Left ventricle myocardium superior (tissue), 1 donor: ENCODE measurements at regions of chr6 and their contacts with region 1.

Region 1: GRCh38 chr6:56370561-56371211 is 123.3 kb upstream of the COL21A1 start:
- DNase-seq: no peak
- ATAC-seq: peak; percentile 78

Region 2: DNA sequence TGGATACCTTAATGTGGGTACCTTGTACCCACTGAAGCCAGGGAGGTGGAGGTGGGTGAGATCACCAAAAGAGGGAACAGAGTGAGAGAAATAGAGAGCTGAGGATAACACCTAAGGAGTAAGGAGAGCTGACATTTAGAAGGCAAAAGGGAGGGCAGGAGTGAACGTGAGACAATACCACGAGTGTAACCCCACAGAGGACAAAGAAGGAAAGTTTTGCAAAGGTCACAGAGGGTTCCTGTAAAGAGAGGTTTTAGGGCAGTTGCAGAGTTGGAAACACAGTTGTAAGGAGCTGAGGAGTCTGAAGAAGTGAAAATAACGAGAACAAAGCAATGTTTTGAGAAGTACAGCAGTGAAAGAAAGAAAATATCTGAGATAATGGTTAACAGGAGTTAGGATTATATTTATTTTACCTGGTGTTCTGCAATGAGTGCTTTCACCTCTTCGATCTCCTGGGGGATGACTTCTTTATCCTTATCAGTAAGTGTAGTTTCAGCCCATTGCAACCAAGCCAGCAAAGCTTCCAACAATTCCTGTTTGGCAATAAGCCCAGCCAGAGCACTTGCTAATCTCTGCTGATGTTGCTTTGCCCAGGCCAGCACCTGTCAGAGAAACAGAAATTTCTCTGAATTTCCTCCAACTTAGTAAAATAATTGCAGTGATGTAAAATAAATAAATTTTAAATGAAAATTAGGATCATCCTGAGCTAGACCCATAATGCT is 105.2 kb after region 1 on chr6:
- intact Hi-C with region 1: loop called (anchors 10 kb)
- DNase-seq: no peak
- ATAC-seq: peak; percentile 91